ENCODE measurements at regions of chr6 and their contacts with region 1.

Region 1: GRCh38 chr6:138001750-138002349 is 105.4 kb downstream of the PERP start:
- DNase-seq: peak; percentile 57
- ATAC-seq: peak; percentile 67

Region 2: DNA sequence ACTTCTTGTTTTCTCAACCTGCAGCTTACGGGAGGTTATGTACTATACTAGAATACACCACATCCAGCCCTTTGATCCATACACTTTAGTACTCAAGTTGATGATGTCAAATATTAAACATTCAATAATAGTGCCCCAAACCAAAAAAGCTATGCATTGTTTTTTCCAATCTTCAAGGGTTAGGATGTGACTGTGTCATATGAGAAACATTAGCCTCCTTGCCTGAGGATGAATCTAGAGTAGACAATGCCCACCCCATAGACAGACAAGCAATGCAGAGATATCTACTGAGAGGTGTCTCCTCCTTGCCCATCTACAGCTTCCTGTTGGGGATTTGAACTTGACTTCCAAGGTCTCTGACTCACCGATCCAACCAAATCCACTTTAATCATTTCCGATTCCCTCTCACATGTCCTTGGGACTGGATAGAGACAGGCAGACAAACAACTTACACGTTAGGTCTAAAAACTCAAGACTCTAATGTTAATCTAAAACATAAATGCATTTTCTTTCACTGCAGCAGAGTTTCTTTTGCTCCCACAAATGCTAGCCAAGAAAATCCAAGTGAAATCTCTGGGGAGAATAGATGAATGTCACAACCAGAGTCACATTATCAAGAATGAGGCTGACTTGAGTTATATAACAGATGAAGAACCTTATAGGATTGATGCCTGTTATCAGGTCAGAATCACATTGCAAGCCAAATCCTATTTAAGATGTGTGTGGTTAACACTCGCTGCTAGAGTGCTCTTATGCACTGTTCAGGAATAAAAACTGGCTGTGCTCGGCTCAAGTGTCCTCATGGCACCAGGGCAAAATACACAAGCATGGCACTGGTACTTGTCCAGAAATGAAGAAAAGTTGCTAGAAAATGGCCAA is 210.3 kb before region 1 on chr6:
- intact Hi-C with region 1: no loop called
- DNase-seq: no peak
- ATAC-seq: no peak

Region 3: DNA sequence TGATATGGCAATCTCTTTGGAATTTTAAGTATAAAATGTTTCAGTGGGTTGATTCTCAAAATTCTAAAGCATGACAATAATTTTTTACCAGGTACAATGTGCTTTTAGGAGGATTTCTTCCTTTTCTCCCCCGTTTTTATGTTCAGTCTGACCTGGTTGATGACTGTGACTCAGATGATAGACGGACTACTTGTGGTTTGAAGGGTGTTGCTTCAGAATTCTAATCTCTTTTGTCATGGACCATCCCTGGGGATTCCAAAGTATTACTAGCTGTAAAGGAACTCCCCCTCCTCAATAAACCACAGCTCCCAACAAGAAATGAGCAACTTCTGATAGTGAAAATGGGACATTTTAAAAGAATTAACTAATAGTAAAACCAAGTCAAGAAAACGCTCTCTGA is 169.7 kb before region 1 on chr6:
- intact Hi-C with region 1: no loop called
- DNase-seq: no peak
- ATAC-seq: no peak

Region 4: DNA sequence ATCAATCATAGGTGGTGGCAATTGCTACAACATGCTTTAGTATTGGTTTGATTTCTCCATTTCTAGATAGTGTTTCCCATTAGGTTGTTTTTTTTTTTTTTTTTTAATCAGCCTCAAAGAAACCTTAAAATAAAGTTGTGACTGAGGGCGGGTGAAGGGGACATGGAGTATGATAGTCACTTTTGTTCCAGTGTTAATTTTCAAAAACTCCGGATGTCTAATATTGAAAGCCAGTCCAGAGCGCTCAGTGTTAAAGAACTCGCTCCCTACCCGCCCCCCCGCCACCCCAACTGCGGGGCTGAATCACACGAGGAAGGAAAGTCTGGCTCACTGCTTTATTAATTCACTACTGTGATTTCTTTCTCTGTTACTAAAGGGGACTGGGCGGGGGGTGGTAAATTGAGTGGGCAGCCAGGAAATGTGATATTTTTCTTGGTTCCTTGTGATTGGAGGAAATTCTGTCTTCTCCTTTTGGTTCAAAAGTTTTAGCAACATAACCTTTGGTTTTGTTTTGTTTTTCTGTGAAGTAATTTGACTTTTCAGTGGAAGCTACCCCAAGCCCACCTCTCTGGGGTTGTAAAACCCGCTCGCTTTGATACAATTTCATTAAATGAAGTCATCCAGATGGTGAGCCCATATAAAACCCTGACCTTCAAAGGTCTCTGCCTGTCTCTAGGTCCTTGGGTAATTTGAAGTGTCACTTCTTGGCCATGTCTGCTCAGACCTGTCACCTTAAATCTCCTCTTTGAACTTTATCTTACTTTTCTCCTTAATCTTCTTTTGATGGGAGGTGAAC is 96.8 kb before region 1 on chr6:
- intact Hi-C with region 1: no loop called
- DNase-seq: no peak
- ATAC-seq: no peak

Region 5: GRCh38 chr6:138109042-138109997 is 107.5 kb after region 1 on chr6:
- intact Hi-C with region 1: loop called (anchors 2 kb)
- DNase-seq: peak; percentile 65
- ATAC-seq: no peak